ENCODE measurements at regions of chr15 and their contacts with region 1.

Region 1: GRCh38 chr15:79853458-79854328 is 43.1 kb downstream of the MTHFS start:
- DNase-seq: peak; percentile 71
- H3K4me3 ChIP-seq: no peak overlapping the region
- H3K27ac ChIP-seq: no peak overlapping the region
- H3K4me1 ChIP-seq: peaks cover 8 to 15% of the 10 kb centered on the region in 2 donors
- H3K27me3 ChIP-seq: no peaks in the 10 kb centered on the region
- CTCF ChIP-seq: peak; percentile 87 to 94 (median 90)
- POLR2A ChIP-seq: no peak

Region 2: GRCh38 chr15:79339564-79340314 is 514.0 kb before region 1 on chr15:
- intact Hi-C with region 1: loop called (anchors 10 kb)
- DNase-seq: peak; percentile 19 to 32
- H3K4me3 ChIP-seq: no peak overlapping the region
- H3K27ac ChIP-seq: no peak overlapping the region
- H3K4me1 ChIP-seq: no peaks in the 10 kb centered on the region
- H3K27me3 ChIP-seq: no peaks in the 10 kb centered on the region
- CTCF ChIP-seq: peak; percentile 71 to 96 (median 86)
- POLR2A ChIP-seq: no peak

Measured in thyroid gland (tissue), 4 donors.